ENCODE measurements at regions of chr1 and their contacts with region 1.

Region 1: DNA sequence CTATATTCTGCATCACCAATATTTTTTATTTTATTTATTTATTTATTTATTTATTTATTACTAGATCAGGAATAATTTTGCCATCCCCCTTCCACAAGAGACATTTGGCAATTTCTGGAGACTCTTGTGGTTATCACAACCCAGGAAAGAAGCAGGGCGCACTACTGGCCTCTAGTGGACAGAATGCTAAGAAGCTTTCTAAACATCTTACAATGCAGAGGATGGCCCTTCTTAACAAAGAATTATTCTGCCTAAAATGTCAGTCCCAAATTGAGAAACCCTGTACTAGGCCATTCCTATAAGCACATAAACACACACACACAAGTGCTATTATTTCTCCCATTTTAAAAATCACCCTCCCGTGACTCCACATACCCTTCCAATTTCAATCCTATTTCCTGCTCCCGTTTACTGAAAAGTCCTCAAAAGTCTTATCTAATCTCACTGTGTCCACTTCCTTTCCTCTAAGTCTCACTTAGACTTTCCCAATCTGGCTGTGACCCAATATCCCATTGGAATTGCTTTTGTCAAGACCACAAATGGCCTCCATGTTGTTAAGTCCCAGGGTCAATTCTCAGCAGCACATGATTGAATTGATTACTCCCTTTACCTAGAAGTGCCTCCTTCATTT is 43.7 kb upstream of the RNF11 start:
- DNase-seq: peak; percentile 65
- H3K4me3 ChIP-seq: no peak overlapping the region
- H3K27ac ChIP-seq: no peak overlapping the region
- H3K27me3 ChIP-seq: no peaks in the 10 kb centered on the region
- CTCF ChIP-seq: peak; percentile 91

Region 2: DNA sequence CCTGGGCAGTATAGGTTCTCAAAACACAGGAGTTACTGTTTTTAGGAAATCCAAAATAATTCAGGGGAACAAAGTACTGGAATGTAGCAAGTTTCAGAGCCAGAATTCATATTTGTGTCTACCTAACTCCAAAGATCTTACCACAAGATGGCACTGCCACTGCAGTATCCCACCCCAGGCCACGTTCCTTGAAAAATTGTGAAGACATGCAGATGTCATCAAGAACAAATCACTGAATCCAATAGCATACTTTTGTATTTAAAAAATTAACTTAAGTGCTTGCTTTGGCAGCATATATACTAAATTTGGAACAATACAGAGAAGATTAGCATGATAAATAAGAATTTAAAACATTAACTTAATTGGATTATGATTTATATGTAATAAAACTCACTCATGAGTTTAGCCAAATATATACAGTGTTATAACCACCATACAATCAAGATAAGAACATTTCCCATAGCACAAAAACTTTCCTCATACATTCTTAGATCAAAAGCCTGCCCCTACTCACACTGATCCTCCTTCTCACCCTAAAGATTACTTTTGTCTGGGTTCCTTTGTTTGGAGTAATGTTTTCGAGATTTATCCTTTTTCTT is 442.2 kb before region 1 on chr1:
- CTCF ChIA-PET with region 1: interaction called, 21 read pairs
- POLR2A ChIA-PET with region 1: no interaction called
- DNase-seq: no peak
- H3K4me3 ChIP-seq: no peak overlapping the region
- H3K27ac ChIP-seq: no peak overlapping the region
- H3K27me3 ChIP-seq: no peaks in the 10 kb centered on the region
- CTCF ChIP-seq: peak; percentile 62

Region 3: GRCh38 chr1:50873458-50874187 is 318.7 kb before region 1 on chr1:
- CTCF ChIA-PET with region 1: interaction called, 46 read pairs
- POLR2A ChIA-PET with region 1: no interaction called
- DNase-seq: peak; percentile 18
- H3K4me3 ChIP-seq: peak overlapping the region; percentile 14; the same call in 1 of the 2 replicates
- H3K27ac ChIP-seq: no peak overlapping the region
- H3K27me3 ChIP-seq: no peaks in the 10 kb centered on the region
- CTCF ChIP-seq: peak; percentile 71

Region 4: DNA sequence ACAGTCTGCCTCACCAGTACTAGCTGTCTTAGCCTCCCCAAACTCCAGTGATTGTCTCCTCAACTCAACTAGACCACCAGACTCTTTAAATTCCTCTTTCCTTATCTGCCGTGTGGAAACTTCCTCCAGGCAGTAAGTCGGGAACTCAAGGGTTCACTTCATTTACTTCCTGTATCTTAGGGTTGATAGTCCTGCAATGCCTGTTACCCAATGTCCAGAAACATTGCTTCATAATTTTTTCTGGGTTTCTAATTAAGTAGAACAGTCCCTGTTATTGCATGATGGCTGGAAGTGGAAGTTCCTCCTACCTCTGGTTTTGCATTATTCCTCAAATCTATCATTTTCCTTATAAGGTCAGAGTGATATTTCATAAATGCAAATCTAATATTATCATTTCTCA is 17.1 kb before region 1 on chr1:
- CTCF ChIA-PET with region 1: interaction called, 53 read pairs
- POLR2A ChIA-PET with region 1: no interaction called
- DNase-seq: no peak
- H3K4me3 ChIP-seq: no peak overlapping the region
- H3K27ac ChIP-seq: no peak overlapping the region
- H3K27me3 ChIP-seq: no peaks in the 10 kb centered on the region
- CTCF ChIP-seq: no peak

Region 5: DNA sequence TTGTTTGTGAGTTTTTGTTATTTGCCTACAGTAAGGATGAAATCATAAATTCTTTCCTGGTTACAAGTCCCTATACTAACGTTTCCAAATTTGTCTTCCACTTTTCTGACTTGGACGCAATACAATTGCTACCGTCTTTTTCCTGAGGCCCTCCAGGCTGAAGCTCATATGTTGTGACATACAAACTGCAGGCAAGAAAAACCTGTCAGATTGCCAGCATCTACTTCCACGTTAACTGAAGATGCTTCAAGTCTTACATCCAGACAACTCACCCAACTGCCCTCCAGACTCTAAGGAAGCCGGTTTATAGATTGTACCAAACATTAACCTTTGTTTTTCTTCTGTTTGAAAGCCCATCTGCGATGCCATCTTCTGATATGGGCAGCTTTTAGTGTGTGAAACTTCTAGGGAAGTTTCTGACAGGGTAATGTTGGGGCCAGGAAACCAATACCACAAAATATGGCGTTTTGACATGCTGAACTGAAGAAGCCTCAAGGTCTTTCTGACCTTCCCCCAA is 22.3 kb after region 1 on chr1:
- CTCF ChIA-PET with region 1: interaction called, 10 read pairs
- POLR2A ChIA-PET with region 1: no interaction called
- DNase-seq: peak; percentile 73
- H3K4me3 ChIP-seq: no peak overlapping the region
- H3K27ac ChIP-seq: no peak overlapping the region
- H3K27me3 ChIP-seq: no peaks in the 10 kb centered on the region
- CTCF ChIP-seq: no peak

Measured in AG04450 (cell line).